ENCODE measurements at regions of chr10 and their contacts with region 1.

Region 1: DNA sequence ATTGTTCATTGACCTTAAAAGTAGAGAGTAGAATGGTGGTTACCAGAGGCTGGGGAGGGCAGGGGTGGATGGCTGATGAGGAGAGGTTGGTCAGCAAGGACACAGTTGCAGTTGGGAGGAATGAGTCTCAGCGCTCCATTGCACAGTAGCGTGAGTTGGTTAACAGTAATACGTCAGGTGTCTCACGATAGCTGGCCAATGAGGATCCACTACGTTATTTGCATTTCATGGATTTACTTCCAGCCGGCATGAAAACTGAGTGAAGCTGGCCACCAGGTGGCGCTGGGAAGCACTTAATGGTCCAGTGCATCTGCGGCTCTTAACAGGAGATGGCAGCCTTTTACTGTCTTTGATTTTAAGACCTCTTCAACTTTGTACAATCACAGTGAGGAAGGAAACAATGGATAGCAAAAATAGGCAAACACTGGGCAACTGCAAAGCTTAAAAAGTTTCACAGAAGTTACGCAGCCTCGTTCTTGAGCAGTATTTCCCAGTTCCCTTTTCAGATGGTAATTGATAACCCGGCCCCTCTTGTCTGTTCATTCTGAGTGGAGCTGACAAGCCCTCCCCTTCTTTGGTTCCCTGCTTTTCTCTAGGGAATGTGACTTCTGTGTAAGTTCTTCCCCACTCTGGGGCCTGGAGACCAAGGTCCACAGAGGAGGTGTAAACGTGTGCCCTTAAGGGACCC is 23.7 kb downstream of the AKR1E2 start:
- DNase-seq: peak; percentile 44
- H3K4me3 ChIP-seq: no peak overlapping the region
- H3K27me3 ChIP-seq: no peaks in the 10 kb centered on the region
- CTCF ChIP-seq: peak; percentile 99

Region 2: GRCh38 chr10:4813023-4813422 is 36.7 kb before region 1 on chr10:
- CTCF ChIA-PET with region 1: interaction called, 18 read pairs
- POLR2A ChIA-PET with region 1: no interaction called
- DNase-seq: peak; percentile 36
- H3K4me3 ChIP-seq: no peak overlapping the region
- H3K27me3 ChIP-seq: no peaks in the 10 kb centered on the region
- CTCF ChIP-seq: no peak

Region 3: GRCh38 chr10:4867520-4868356 is 18.0 kb after region 1 on chr10:
- CTCF ChIA-PET with region 1: interaction called, 18 read pairs
- POLR2A ChIA-PET with region 1: no interaction called
- DNase-seq: no peak
- H3K4me3 ChIP-seq: no peak overlapping the region
- H3K27me3 ChIP-seq: no peaks in the 10 kb centered on the region
- CTCF ChIP-seq: no peak

Region 4: DNA sequence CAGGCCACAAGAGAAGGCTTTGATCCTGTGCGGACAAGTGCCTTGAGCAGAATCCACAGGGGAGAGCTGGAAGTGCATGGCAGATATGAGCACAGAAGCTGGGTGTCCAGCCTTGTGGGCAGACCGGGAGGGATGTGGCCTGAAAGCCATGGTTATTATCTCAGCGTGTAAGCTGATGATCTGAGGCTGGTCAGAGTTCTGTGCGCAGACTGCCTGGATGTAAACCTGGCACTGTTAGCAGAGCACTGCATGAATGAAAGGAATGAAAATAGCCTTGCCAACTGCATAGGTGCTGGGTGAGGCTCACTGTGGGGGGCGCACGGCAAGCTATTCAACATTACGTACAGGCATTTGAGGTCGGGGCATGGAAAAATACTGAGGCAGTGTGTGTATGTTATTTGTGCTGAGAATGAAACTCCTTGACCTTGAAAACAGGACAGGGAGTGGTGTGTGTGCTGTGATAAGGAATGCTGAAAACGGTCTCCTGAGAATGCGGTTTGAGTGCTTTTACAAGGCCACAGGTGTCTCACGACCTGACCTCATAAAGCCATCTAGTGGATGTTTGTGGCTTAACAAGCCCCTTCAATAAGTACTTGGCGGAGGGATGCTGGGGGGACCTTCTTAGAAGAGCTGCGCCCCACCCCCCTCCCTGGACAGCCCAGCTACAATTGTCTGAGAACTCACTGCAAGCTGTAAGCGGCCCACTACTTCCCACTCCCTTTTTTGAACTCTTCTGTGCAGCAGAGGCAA is 132.2 kb after region 1 on chr10:
- CTCF ChIA-PET with region 1: interaction called, 52 read pairs
- POLR2A ChIA-PET with region 1: no interaction called
- DNase-seq: no peak
- H3K4me3 ChIP-seq: no peak overlapping the region
- H3K27me3 ChIP-seq: no peaks in the 10 kb centered on the region
- CTCF ChIP-seq: peak; percentile 34; the same call in 1 of the 2 replicates

Region 5: DNA sequence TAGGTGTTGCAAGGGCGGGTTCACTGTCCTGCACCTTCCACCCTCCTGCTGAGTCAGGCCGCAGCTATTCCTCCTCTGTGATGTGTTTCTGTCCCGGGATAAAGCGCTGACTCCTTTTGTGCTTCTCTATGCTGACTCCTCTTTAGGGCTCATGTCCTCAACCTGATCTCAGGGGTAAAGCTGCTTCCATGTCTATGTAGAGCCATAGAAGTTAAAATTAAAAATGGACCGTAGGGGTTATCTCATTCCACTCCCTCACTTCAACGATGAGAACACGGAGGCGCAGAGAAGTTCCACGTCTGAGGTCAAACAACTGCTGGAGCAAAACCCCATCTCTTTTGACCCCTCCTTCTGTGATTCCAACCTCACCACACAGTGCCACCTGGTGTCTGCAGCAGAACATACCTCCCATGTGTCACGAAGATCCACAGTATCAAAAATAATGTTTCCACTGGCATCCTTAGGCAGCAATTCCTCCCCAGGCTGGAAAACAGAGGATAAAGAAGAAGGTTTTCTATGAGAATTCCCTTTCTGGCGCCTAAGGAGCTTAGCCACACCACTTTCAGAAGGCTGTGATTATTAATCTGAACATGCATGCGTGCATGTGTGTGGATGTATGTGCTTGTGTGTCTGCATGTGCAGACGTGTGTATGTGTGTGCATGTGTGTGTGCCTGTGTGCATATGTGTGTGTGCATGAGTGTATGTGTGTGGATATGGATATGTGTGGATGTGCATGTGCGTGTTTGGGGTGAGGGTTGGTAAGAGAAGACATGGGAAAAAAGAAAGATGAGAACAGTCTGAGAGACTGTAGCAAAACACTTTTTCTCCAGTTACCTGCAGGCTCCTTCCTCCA is 433.8 kb after region 1 on chr10:
- CTCF ChIA-PET with region 1: interaction called, 73 read pairs
- POLR2A ChIA-PET with region 1: no interaction called
- DNase-seq: no peak
- H3K4me3 ChIP-seq: no peak overlapping the region
- H3K27me3 ChIP-seq: no peaks in the 10 kb centered on the region
- CTCF ChIP-seq: peak; percentile 73

Region 6: DNA sequence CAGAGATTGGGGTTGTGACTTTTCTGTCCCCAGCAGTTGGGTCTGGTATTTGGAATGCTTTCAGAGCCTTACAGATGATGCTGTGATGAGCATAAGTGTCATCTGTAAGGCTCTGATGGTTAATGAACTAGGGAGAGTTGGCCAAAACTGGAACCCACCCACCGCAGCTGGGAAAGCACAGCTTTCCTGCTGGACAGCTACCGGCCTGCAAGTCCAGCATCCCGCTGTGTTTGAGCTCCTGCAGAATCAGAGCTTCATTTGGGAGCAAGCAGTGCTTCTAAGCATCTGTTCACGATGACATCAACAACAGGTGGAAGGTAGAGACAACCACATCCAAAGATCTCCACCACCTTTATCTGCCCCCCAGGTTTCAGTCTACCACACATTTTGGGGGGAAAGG is 526.8 kb after region 1 on chr10:
- CTCF ChIA-PET with region 1: interaction called, 10 read pairs
- POLR2A ChIA-PET with region 1: no interaction called
- DNase-seq: no peak
- H3K4me3 ChIP-seq: no peak overlapping the region
- H3K27me3 ChIP-seq: no peaks in the 10 kb centered on the region
- CTCF ChIP-seq: no peak